HepG2 (cell line): ENCODE measurements at regions of chr6 and their contacts with region 1.

Region 1: GRCh38 chr6:5747379-5747778 is 259.3 kb downstream of the NRN1 start:
- DNase-seq: no peak
- ATAC-seq: no peak
- H3K4me3 ChIP-seq: no peak overlapping the region
- H3K27ac ChIP-seq: no peak overlapping the region
- H3K4me1 ChIP-seq: no peaks in the 10 kb centered on the region
- H3K27me3 ChIP-seq: no peaks in the 10 kb centered on the region
- CTCF ChIP-seq: no peak
- EP300 ChIP-seq: no peak
- POLR2A ChIP-seq: no peak
- RAD21 ChIP-seq: no peak

Region 2: GRCh38 chr6:5665173-5665572 is 82.2 kb before region 1 on chr6:
- CTCF ChIA-PET with region 1: no interaction called
- POLR2A ChIA-PET with region 1: no interaction called
- in situ Hi-C with region 1: no loop called
- intact Hi-C with region 1: no loop called
- DNase-seq: no peak
- ATAC-seq: no peak
- H3K4me3 ChIP-seq: no peak overlapping the region
- H3K27ac ChIP-seq: no peak overlapping the region
- H3K4me1 ChIP-seq: no peaks in the 10 kb centered on the region
- H3K27me3 ChIP-seq: no peaks in the 10 kb centered on the region
- CTCF ChIP-seq: no peak
- EP300 ChIP-seq: no peak
- POLR2A ChIP-seq: no peak
- RAD21 ChIP-seq: no peak

Region 3: DNA sequence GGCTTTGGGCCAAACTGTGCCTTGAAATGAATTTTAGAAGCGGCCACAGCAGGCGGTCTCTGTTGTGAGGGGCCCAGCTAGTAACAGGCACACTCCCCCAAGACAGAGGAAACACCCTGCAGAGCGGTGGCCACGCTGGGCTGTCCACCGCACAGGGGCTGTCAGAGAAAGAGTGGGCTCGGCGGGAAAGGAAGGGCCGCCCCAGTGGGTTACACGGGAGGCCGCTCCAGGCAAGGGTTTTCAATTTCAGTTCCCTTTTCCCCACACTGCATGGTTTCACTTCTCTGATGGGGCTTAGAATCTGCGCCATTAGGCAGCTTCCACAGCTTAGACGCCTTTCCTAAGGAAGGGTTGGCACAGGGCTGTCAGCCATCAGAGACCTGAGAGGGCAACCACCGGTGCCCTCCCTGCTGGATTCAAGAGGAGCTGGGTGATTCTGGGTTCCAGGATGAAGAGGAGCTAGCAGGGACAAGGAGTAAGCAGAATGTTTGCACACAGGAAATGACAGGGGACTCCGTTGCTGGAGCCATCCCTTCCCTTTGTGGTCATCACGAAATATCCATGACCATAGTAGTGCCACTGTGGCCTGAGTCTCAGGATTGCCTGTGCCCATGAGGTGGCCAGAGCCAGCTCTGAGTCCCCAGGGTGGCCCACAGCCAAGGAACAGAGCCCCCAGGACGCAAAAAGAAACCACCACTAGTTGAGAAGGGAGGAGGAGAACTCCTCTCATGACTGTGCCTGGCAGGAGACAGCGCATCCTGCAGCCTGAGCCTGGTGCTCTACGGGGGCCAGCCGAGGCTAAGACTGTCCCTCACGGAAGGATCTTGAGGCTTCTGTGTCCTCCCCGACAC is 23.3 kb before region 1 on chr6:
- CTCF ChIA-PET with region 1: no interaction called
- POLR2A ChIA-PET with region 1: no interaction called
- in situ Hi-C with region 1: no loop called
- intact Hi-C with region 1: no loop called
- DNase-seq: no peak
- ATAC-seq: no peak; the same call in 2 of the 3 replicates
- H3K4me3 ChIP-seq: no peak overlapping the region
- H3K27ac ChIP-seq: no peak overlapping the region
- H3K4me1 ChIP-seq: no peaks in the 10 kb centered on the region
- H3K27me3 ChIP-seq: no peaks in the 10 kb centered on the region
- CTCF ChIP-seq: no peak
- EP300 ChIP-seq: no peak
- POLR2A ChIP-seq: no peak
- RAD21 ChIP-seq: no peak

Region 4: GRCh38 chr6:5764401-5764955 is 17.1 kb after region 1 on chr6:
- CTCF ChIA-PET with region 1: no interaction called
- POLR2A ChIA-PET with region 1: no interaction called
- in situ Hi-C with region 1: no loop called
- intact Hi-C with region 1: no loop called
- DNase-seq: no peak
- ATAC-seq: no peak
- H3K4me3 ChIP-seq: no peak overlapping the region
- H3K27ac ChIP-seq: no peak overlapping the region
- H3K4me1 ChIP-seq: no peaks in the 10 kb centered on the region
- H3K27me3 ChIP-seq: no peaks in the 10 kb centered on the region
- CTCF ChIP-seq: no peak
- EP300 ChIP-seq: no peak
- POLR2A ChIP-seq: no peak
- RAD21 ChIP-seq: no peak

Region 5: GRCh38 chr6:5782783-5783547 is 35.6 kb after region 1 on chr6:
- CTCF ChIA-PET with region 1: no interaction called
- POLR2A ChIA-PET with region 1: no interaction called
- in situ Hi-C with region 1: no loop called
- intact Hi-C with region 1: loop called (anchors 1 kb)
- DNase-seq: peak; percentile 12
- ATAC-seq: peak; percentile 49
- H3K4me3 ChIP-seq: no peak overlapping the region
- H3K27ac ChIP-seq: no peak overlapping the region
- H3K4me1 ChIP-seq: peaks cover 7% of the 10 kb centered on the region
- H3K27me3 ChIP-seq: peaks cover 5 to 23% of the 10 kb centered on the region in 2 experiments; a peak in 3 of 5 replicates
- CTCF ChIP-seq: no peak
- EP300 ChIP-seq: no peak
- POLR2A ChIP-seq: no peak
- RAD21 ChIP-seq: no peak

Region 6: DNA sequence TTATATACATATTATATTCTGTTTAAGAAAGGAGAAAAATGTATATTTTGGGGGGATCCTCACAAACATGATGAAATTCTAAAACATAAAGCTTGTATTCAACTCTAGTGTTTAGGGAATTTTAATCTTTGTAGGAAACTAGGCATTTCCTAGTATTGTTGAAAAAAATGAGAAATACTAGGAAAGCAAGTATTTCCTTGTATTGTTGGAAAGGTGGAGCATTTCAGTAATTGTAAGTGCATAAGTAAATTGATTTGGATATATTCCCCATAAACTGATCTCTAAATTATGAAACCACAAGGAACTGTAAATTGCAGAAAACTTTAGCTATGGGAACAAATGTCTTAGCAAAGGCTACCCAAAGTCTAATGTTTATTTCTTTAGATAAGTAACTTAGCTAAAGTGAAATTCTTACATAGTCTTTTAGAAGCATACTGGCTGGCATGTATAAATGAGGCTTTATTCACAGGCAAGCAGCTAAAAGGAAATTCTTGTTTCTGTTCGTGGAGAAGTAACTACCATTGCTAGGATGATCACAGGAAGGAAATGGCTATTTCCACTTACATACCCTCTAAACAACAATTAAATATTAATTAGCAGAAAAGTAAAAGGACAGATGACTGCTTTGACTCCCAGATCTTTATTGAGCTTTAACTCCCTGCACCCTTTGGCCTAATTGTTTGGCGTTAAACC is 279.3 kb after region 1 on chr6:
- CTCF ChIA-PET with region 1: no interaction called
- POLR2A ChIA-PET with region 1: no interaction called
- in situ Hi-C with region 1: no loop called
- intact Hi-C with region 1: no loop called
- DNase-seq: no peak
- ATAC-seq: no peak
- H3K4me3 ChIP-seq: no peak overlapping the region
- H3K27ac ChIP-seq: no peak overlapping the region
- H3K4me1 ChIP-seq: peaks cover 26% of the 10 kb centered on the region
- H3K27me3 ChIP-seq: peaks cover 0 to 4% of the 10 kb centered on the region in 2 experiments; a peak in 1 of 5 replicates
- CTCF ChIP-seq: no peak
- EP300 ChIP-seq: no peak
- POLR2A ChIP-seq: no peak
- RAD21 ChIP-seq: no peak